IMR-90 (cell line): ENCODE measurements at regions of chr1 and their contacts with region 1.

Region 1: GRCh38 chr1:112935461-112936289 is 20.3 kb downstream of the SLC16A1 start:
- DNase-seq: peak; percentile 78
- ATAC-seq: peak; percentile 46
- H3K4me3 ChIP-seq: no peak overlapping the region
- H3K27ac ChIP-seq: peak overlapping the region; percentile 49; the same call in 1 of the 2 replicates
- H3K4me1 ChIP-seq: peaks cover 6% of the 10 kb centered on the region; the same call in 1 of the 2 replicates
- H3K27me3 ChIP-seq: no peaks in the 10 kb centered on the region
- CTCF ChIP-seq: no peak
- POLR2A ChIP-seq: no peak
- RAD21 ChIP-seq: no peak

Region 2: DNA sequence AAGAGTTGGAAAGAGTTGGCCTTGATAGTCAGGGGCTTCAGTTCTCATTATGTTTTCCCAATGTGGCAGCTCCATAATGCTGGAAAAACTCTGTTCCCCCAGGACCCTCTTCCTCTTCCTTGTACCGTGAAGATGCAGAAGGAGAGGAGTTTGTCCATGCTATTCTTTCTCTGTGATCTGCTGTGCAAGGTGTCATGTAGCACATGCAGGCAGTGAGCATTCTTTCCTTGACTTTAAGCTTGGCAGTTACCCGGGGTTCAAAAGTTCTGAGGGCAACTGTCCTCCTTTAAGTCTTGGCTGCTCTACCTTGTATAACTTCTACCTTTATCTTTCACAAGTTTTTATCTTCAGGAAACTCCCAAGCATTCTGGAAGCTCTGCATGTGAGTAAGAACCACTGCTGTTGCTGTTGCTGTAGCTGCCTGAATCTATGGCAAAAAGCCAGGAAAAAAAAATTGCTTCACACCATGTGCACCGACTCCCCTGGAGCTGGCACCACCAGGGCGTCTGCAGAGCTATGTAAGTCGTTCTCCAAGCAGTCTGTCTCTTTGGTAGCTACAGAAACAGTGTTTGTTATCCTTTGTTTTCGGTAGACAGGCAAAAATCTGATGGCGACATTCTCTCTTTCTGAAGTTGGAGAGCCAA is 63.0 kb after region 1 on chr1:
- CTCF ChIA-PET with region 1: no interaction called
- POLR2A ChIA-PET with region 1: no interaction called
- dilution Hi-C with region 1: no loop called
- in situ Hi-C with region 1: loop called (anchors 10 kb)
- intact Hi-C with region 1: no loop called
- DNase-seq: peak; percentile 71
- ATAC-seq: peak; percentile 73
- H3K4me3 ChIP-seq: no peak overlapping the region
- H3K27ac ChIP-seq: no peak overlapping the region
- H3K4me1 ChIP-seq: peaks cover 2% of the 10 kb centered on the region; the same call in 1 of the 2 replicates
- H3K27me3 ChIP-seq: no peaks in the 10 kb centered on the region
- CTCF ChIP-seq: no peak
- POLR2A ChIP-seq: no peak
- RAD21 ChIP-seq: no peak